Posterior vena cava (tissue), 2 donors: ENCODE measurements at regions of chr13 and their contacts with region 1.

Region 1: DNA sequence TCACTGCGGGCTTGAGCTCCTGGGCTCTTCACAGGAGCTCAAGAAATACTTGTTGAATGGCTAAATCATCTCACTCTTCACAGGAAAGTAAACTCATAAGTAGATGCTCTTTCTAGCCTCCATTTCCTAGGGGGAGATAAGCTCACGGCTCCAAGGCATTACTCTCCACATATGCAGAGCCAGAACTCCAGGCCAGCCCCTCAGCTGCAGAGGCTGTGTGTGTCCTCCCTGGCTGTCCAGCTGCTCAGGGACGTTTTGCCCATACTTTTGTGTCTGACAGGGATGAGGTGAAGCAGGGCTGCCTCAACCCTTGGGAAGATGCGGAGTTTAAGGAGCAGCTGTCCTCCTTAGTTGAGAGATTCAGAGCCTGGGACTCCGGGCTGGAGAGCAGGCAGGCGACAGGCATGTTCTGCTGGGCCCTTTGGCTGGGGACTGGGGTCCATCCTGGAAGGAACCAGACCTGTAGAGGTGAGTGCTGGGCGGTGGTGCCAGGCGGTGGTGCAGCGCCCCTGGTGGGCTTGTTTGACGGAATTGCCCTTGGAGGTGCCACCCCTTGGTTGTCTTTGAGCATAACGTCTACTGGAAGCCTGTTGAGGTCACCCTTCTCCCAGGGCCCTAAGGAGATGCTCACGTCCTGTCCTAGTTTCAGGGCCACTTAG is 20.5 kb upstream of the SLC15A1 start:
- DNase-seq: no peak

Region 2: GRCh38 chr13:98626298-98626935 is 146.5 kb before region 1 on chr13:
- intact Hi-C with region 1: loop called in 1 of 2 experiments (anchors 5 kb)
- DNase-seq: no peak

Region 3: DNA sequence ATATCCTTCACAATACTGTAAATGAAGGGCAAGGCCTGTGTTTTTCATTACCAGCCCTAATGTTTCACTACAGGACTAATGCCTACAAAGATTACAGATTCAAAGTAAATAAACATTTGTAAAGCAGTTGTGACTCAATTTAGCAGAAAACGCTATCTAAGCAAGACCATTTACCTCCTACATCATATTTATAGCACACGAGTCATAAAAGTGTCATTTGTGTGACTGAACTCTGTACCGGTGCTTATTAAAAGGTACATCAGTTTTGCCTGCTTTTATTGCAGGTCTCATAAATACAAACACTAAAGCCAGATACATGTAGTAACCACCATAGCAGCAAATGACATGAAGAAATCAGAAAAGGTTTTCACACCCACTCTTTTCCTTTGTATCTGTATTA is 41.1 kb after region 1 on chr13:
- intact Hi-C with region 1: no loop called
- DNase-seq: no peak

Region 4: GRCh38 chr13:98869408-98870090 is 96.6 kb after region 1 on chr13:
- intact Hi-C with region 1: no loop called
- DNase-seq: no peak

Region 5: DNA sequence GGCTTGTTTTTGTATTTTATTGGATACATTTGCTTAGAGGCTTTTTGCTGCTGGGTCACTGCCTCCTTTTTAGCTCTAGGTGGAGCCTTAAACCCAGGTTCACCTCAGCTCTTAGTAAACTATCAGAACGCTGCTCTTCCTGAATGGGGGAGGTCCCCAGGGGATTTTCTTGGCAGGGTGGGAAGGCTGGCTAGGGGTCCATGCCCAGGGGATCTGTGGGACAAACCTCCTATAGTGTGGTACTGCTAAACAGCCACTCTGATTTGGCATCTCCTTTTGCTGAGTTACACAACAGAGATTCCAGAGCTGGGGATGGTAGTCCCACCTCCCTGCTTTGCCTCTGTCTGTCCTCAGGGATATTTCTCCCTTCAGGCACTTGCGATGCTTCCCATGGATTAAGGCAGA is 993.7 kb after region 1 on chr13:
- intact Hi-C with region 1: no loop called
- DNase-seq: no peak